Activated B cell treated with CpG ODN at 0.5 μM for 24 hours (primary cell): ENCODE measurements at regions of chr3 and their contacts with region 1.

Region 1: DNA sequence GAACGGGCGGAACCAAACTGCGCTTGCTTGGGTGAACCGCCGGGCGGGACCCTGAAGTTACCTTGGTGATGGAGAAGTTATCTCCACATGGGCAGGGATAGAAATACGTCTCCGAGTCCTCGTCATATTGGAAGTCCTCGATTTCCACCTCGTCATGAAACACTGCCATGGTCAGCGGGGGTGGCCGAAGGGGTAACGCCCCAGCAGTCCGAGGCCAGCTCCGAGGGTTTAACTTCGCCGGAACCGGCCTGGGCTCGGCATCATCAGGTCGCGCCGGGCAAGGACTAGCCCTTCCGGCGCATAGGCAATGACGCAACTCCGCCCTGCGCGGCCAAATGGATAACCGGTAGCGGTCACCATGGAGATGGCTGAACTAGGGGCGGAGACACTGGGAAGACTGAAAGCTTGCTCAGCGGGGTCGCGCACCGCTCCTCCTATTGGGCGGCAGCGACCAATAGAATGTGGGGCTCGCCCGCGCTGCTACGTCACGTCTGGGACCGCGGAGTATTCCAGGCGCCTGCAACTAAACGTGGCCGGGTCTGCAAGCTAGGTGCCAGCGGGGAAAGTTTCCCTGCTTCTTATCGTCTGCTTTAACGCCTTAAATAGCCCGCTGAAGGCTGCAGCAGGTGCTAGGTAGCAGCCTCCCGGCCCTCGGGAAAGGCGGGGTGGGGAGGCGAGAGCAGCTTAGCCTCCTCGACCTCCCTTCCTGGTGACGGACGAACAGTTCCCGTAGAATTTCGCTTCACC is at the starts of genes DPH3 and OXNAD1:
- DNase-seq: peak; percentile 99
- ATAC-seq: peak; percentile 96
- H3K4me3 Mint-ChIP-seq: peak within 1 kb of the TSS; percentile 100
- H3K27ac Mint-ChIP-seq: peak within 1 kb of the TSS; percentile 100
- H3K4me1 Mint-ChIP-seq: peaks cover 25% of the 10 kb centered on the region
- H3K27me3 Mint-ChIP-seq: no peaks in the 10 kb centered on the region
- CTCF ChIP-seq: no peak
- total RNA-seq, gene DPH3: 13.4 and 14.7 TPM in 2 replicates
- total RNA-seq, gene OXNAD1: 5.5 and 8.7 TPM in 2 replicates

Region 2: DNA sequence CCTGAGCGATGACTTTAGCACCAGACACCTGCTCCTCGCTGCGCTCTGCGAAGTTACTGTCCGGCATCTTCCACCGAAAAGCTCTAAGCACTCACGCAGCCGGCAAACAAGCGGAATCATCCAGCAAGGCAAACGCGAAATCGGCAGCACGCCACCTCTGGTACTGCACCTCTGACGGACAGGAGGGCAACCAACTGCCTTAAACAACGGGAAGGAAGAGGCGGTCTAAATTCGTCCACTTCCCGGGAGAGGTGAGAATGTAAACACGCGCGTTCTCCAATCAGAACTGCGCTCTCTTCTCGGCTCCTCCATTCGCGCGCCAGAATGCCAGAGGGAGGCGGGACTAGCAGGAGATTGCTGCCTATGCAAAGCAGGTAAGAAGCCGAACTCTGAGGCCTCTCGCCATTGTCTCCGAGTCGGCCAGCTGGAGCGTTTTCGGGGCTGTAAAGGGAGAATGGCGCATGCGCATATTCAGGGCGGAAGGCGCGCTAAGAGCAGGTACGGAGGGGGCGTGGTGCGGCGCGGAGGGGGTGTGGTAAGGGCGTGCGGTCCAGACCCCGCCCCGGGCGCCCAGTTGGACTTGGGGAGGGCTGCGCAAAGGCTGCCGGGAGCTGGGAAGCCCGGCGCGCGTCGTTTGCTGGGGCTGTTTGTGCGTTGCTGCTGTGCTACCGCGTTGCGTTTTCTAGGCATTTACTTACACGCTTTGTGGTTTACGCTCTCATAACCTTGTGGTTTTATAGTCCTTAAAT is 663.3 kb before region 1 on chr3 and contains the starts of genes BTD and HACL1:
- CTCF ChIA-PET with region 1: no interaction called
- POLR2A ChIA-PET with region 1: interaction called, 5 read pairs
- intact Hi-C with region 1: loop called (anchors 1 kb)
- DNase-seq: peak; percentile 97
- ATAC-seq: peak; percentile 89
- H3K4me3 Mint-ChIP-seq: peak within 1 kb of the TSS; percentile 94
- H3K27ac Mint-ChIP-seq: peak within 1 kb of the TSS; percentile 98
- H3K4me1 Mint-ChIP-seq: peaks cover 38% of the 10 kb centered on the region
- H3K27me3 Mint-ChIP-seq: no peaks in the 10 kb centered on the region
- CTCF ChIP-seq: no peak
- total RNA-seq, gene BTD: 7.6 and 9.1 TPM in 2 replicates
- total RNA-seq, gene HACL1: 24.7 and 28.4 TPM in 2 replicates

Region 3: GRCh38 chr3:16290007-16290826 is 25.3 kb after region 1 on chr3:
- CTCF ChIA-PET with region 1: interaction called, 14 read pairs
- POLR2A ChIA-PET with region 1: interaction called, 8 read pairs
- intact Hi-C with region 1: loop called (anchors 2 kb)
- DNase-seq: no peak
- ATAC-seq: peak; percentile 49
- H3K4me3 Mint-ChIP-seq: no peak overlapping the region
- H3K27ac Mint-ChIP-seq: no peak overlapping the region
- H3K4me1 Mint-ChIP-seq: peaks cover 36% of the 10 kb centered on the region
- H3K27me3 Mint-ChIP-seq: no peaks in the 10 kb centered on the region
- CTCF ChIP-seq: peak; percentile 51

Region 4: GRCh38 chr3:16550676-16551341 is 285.9 kb after region 1 on chr3:
- CTCF ChIA-PET with region 1: interaction called, 22 read pairs
- POLR2A ChIA-PET with region 1: no interaction called
- intact Hi-C with region 1: loop called (anchors 1 kb)
- DNase-seq: peak; percentile 32
- ATAC-seq: peak; percentile 98
- H3K4me3 Mint-ChIP-seq: no peak overlapping the region
- H3K27ac Mint-ChIP-seq: peak overlapping the region; percentile 43
- H3K4me1 Mint-ChIP-seq: peaks cover 7% of the 10 kb centered on the region
- H3K27me3 Mint-ChIP-seq: peaks cover 6% of the 10 kb centered on the region
- CTCF ChIP-seq: no peak

Region 5: DNA sequence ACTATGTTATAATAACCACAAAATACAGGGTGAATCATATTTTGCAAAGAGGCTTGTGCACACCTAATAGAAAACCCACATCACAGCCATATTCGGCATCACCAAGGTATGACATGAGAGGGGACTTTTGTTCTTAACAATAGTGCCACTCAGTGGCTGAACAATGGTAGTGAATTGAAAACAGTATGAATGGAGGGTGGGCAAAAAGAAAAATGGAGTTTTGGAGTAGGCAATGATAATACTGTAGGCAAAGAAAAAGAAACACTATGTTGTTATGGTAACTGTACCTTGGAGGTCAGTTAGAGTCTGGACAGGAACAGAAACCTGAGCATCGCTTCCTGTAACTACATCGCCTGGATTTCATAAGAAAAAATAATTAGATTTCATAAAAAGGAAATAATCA is 968.5 kb after region 1 on chr3:
- CTCF ChIA-PET with region 1: interaction called, 3 read pairs
- POLR2A ChIA-PET with region 1: no interaction called
- intact Hi-C with region 1: loop called (anchors 1 kb)
- DNase-seq: no peak
- ATAC-seq: peak; percentile 98
- H3K4me3 Mint-ChIP-seq: no peak overlapping the region
- H3K27ac Mint-ChIP-seq: no peak overlapping the region
- H3K4me1 Mint-ChIP-seq: peaks cover 19% of the 10 kb centered on the region
- H3K27me3 Mint-ChIP-seq: no peaks in the 10 kb centered on the region
- CTCF ChIP-seq: no peak

Region 6: DNA sequence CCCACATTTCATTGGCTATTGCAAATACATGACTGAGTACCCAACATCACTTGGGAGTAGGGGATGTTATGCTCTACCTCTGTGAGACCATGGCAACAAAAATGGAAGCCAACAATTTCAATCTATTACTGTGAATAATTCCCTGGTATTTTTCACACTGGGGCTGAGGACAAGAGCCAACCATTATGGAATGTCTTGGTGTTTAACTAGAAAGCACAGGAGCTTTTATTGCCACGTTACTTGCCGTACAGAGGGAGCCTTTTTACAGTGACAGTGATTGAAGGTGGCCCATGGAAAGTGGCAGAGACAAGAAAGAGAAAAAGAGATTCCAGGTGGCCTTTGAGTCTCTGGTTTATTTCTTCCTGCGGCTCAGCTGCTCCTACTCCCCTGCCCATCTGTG is 1583.2 kb after region 1 on chr3:
- CTCF ChIA-PET with region 1: no interaction called
- POLR2A ChIA-PET with region 1: interaction called, 14 read pairs
- intact Hi-C with region 1: no loop called
- DNase-seq: no peak
- ATAC-seq: no peak
- H3K4me3 Mint-ChIP-seq: no peak overlapping the region
- H3K27ac Mint-ChIP-seq: no peak overlapping the region
- H3K4me1 Mint-ChIP-seq: no peaks in the 10 kb centered on the region
- H3K27me3 Mint-ChIP-seq: peaks cover 2% of the 10 kb centered on the region
- CTCF ChIP-seq: no peak